ENCODE measurements at regions of chr12 and their contacts with region 1.

Region 1: DNA sequence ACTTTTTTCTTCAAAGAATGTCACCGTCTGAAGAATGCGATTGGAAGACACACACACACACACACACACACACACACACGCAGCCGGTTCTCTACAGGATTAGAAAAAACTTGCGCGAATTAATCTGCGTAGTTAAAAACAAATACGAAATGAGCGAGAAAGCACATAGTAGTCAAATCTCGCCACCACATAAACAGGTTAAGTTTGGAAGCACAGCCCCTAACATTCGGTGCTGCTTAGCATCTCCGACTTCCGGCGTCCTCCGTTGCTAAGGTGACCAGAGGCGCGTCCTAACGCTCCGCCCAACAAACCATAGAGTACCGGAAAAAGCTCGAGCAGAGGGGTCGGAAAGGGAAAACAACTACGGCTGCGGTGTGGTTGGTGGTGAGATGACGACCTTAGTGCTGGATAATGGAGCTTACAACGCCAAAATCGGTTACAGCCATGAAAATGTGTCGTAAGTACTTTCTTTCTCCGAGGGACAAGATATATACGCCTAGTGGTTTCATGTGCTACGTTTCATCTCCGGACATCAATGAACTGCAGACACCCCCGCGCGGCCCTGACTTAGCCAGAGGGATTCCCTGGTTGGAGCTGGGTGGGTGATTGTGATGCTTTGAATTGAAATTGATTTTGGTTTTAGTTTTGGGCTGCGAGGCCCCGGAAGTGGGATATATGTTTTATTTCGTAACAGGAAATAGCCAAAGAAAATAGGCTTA is at the start of gene ACTR6:
- DNase-seq: peak; percentile 98
- ATAC-seq: peak; percentile 84
- H3K4me3 ChIP-seq: peak within 1 kb of the TSS; percentile 69 to 94 (median 92)
- H3K4me3 Mint-ChIP-seq: peak within 1 kb of the TSS; percentile 90
- H3K27ac ChIP-seq: peak within 1 kb of the TSS; percentile 76 to 93
- H3K27ac Mint-ChIP-seq: peak within 1 kb of the TSS; percentile 91
- H3K4me1 ChIP-seq: peaks cover 14 to 19% of the 10 kb centered on the region in 2 donors
- H3K4me1 Mint-ChIP-seq: peaks cover 26% of the 10 kb centered on the region
- H3K27me3 ChIP-seq: no peaks in the 10 kb centered on the region
- H3K27me3 Mint-ChIP-seq: no peaks in the 10 kb centered on the region
- CTCF ChIP-seq: no peak
- total RNA-seq, gene ACTR6: 28.6 and 30.8 TPM in 2 replicates

Region 2: DNA sequence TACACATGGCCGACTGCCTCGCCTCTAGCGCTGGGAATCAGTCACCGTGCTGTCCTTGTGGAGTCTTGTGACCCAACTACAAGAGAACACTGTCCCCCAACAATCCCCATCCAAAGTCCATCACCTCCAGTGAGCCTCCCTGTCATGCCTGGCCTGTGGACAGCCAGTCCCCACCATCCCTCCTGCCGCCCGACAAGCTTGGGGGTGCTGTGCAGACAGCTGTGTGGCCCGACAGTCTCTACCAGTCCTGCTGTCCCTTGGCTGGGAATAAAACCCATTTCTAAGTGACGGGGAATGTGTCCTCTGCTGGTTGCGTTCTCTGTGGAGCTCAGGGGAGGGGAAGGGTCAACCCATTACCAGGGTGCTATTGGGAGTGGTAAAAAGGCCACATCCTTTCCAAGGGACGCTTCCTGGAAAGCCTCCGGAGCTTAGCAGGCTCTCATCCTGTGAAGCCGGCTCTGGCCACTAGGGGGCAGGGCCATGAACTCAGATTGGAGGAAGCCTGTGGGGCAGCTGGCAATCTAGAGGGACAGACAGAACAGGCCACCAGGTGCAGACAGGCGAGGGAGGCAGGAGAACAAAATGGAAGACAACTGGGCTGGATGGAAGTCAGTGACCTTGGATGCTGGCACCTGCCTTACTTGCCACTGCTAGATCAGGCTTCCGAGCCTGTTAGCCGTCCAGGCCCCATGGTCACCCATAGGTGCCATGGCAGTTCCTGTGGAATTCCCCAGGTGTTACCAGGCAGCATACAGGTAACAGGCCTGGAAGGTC is 46.0 kb before region 1 on chr12:
- CTCF ChIA-PET with region 1: interaction called, 11 read pairs
- POLR2A ChIA-PET with region 1: no interaction called
- intact Hi-C with region 1: no loop called
- DNase-seq: peak; percentile 69
- ATAC-seq: peak; percentile 61
- H3K4me3 ChIP-seq: no peak overlapping the region
- H3K4me3 Mint-ChIP-seq: no peak overlapping the region
- H3K27ac ChIP-seq: no peak overlapping the region
- H3K27ac Mint-ChIP-seq: no peak overlapping the region
- H3K4me1 ChIP-seq: peaks cover 0 to 3% of the 10 kb centered on the region in 2 donors
- H3K4me1 Mint-ChIP-seq: no peaks in the 10 kb centered on the region
- H3K27me3 ChIP-seq: no peaks in the 10 kb centered on the region
- H3K27me3 Mint-ChIP-seq: no peaks in the 10 kb centered on the region
- CTCF ChIP-seq: peak; percentile 86

Region 3: DNA sequence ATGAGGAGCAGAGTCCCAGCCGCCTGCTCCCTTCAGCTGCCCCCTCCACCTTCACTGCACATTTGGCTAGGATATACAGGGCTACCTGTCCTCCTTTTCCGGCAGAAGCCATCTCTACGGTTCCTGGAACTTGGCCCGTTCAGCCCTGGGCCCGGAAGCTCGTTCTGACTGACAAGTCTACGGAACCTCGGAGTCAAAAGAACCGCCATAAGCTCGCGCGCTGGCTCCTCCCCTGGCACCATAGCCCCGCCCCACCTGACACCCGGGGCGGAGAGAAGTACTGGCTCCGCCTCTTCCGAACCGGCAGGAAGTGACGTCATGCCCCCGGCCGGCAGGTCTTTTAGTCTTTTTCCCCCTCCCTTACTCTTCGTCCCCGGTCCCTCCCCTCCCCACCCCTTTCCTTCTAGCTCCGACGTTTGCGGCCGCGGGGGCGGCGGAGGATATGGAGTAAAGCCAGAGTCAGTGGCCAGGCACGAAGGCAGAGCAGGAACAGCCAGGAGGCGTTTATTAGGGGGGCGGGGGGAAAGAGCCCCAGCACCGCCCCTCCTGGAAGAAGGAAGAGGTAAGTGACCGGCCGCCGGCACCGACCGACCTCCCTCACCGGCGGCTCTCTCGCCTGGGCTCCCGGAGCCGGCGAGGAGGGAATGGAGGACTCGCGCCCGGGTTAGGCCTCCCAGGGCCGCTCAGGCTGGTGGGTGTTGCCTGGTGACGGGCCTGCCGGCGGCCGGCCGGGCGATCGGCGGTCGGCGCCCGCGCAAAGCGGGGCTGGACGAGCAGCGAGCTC is 66.4 kb after region 1 on chr12 and contains the starts of genes DEPDC4 and SCYL2:
- CTCF ChIA-PET with region 1: interaction called, 12 read pairs
- POLR2A ChIA-PET with region 1: interaction called, 8 read pairs
- intact Hi-C with region 1: loop called (anchors 1 kb)
- DNase-seq: peak; percentile 98
- ATAC-seq: peak; percentile 93
- H3K4me3 ChIP-seq: peak within 1 kb of the TSS; percentile 81 to 95 (median 89)
- H3K4me3 Mint-ChIP-seq: peak within 1 kb of the TSS; percentile 99
- H3K27ac ChIP-seq: peak within 1 kb of the TSS; percentile 92 to 93
- H3K27ac Mint-ChIP-seq: peak within 1 kb of the TSS; percentile 94
- H3K4me1 ChIP-seq: peaks cover 22 to 23% of the 10 kb centered on the region in 2 donors
- H3K4me1 Mint-ChIP-seq: peaks cover 37% of the 10 kb centered on the region
- H3K27me3 ChIP-seq: no peaks in the 10 kb centered on the region
- H3K27me3 Mint-ChIP-seq: no peaks in the 10 kb centered on the region
- CTCF ChIP-seq: no peak
- total RNA-seq, gene DEPDC4: 0.36 and 1.2 TPM in 2 replicates
- total RNA-seq, gene SCYL2: 38.4 and 39.0 TPM in 2 replicates

Region 4: DNA sequence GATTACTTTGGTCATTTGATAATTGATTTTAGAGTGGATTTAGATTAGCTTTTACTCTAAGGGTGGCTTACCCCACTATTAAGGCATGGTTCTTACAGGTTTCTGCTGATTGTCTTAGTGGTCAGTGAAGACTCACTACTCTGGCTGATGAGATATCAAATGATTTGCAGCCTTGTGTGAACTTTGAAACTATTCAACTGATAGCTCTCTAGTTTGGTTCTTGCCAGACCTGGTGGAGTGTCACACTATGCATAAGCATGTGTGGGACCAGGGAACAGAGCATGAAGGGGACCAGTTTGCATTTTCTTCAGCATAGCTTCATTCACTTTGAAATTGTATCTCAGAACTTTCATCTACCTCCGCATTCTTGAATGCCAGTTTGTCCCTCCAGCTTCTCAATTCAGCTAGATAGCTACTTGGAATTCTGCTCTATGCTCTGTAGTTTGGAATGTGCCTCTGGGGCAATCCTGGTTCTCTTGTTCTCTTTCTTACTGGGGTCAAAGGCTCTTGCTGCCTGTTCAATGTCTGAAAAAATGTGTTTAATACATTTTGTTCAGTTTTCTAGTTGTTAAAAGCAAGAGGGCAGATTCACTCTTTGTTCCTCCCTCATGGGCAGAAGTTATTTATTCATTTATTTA is 79.1 kb after region 1 on chr12:
- CTCF ChIA-PET with region 1: no interaction called
- POLR2A ChIA-PET with region 1: no interaction called
- intact Hi-C with region 1: no loop called
- DNase-seq: no peak
- ATAC-seq: no peak
- H3K4me3 ChIP-seq: no peak overlapping the region
- H3K4me3 Mint-ChIP-seq: no peak overlapping the region
- H3K27ac ChIP-seq: no peak overlapping the region
- H3K27ac Mint-ChIP-seq: no peak overlapping the region
- H3K4me1 ChIP-seq: no peaks in the 10 kb centered on the region
- H3K4me1 Mint-ChIP-seq: peaks cover 12% of the 10 kb centered on the region
- H3K27me3 ChIP-seq: no peaks in the 10 kb centered on the region
- H3K27me3 Mint-ChIP-seq: no peaks in the 10 kb centered on the region
- CTCF ChIP-seq: no peak

Region 5: GRCh38 chr12:102061560-102062418 is 1861.2 kb after region 1 on chr12 and contains the start of gene WASHC3:
- CTCF ChIA-PET with region 1: no interaction called
- POLR2A ChIA-PET with region 1: no interaction called
- intact Hi-C with region 1: loop called (anchors 5 kb)
- DNase-seq: peak; percentile 95
- ATAC-seq: peak; percentile 96
- H3K4me3 ChIP-seq: peak within 1 kb of the TSS; percentile 72 to 92 (median 89)
- H3K4me3 Mint-ChIP-seq: peak within 1 kb of the TSS; percentile 95
- H3K27ac ChIP-seq: peak within 1 kb of the TSS; percentile 93 to 96
- H3K27ac Mint-ChIP-seq: peak within 1 kb of the TSS; percentile 96
- H3K4me1 ChIP-seq: peaks cover 5 to 12% of the 10 kb centered on the region in 2 donors
- H3K4me1 Mint-ChIP-seq: peaks cover 27% of the 10 kb centered on the region
- H3K27me3 ChIP-seq: peaks cover 0 to 4% (median 0%) of the 10 kb centered on the region in 4 experiments
- H3K27me3 Mint-ChIP-seq: no peaks in the 10 kb centered on the region
- CTCF ChIP-seq: no peak
- total RNA-seq, gene WASHC3: 52.8 and 55.8 TPM in 2 replicates